Motor neuron (in vitro differentiated cells): ENCODE measurements at regions of chr15 and their contacts with region 1.

Region 1: DNA sequence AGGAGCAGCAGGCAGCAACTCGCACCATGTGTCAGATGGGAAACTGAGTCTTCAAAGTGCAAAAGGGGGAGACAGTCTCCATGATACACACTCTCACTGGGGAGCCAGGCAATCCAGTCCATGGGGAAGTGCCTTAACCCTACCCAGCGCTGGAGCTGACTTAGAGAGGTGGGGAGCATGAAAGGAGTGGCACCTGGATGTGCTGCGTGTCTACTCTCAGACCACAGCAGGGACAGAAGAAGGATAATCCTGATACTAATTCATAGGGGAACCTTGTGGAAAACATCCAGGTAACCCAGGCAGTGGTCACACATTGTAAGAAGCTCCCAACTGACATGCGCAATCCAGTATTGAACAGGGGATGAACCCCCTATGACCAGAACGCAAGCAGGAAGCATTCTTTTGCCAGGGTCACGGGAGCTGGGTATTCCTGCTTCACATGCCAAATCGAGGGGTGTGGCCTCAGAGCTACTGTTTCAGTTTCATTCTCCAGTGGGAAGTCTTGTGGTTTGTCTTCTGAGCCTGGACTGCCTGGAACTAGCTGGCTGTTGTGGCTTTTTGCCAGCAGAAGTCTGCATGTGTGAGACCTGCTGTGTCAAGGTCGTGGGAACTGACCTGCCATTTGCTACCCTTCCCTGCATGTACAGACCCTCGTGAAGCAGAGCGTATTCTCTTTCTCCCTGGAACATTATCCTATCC is 367.6 kb upstream of the NDN start:
- ATAC-seq: peak in 3 of 8 experiments; percentile 19 to 98 (median 80)
- H3K4me3 ChIP-seq: no peak overlapping the region
- H3K27ac ChIP-seq: no peak overlapping the region
- H3K4me1 ChIP-seq: peaks cover 0 to 4% of the 10 kb centered on the region in 2 donors

Region 2: GRCh38 chr15:24150542-24150941 is 95.8 kb after region 1 on chr15:
- in situ Hi-C with region 1: loop called in 1 of 9 experiments (anchors 25 kb)
- ATAC-seq: no peak
- H3K4me3 ChIP-seq: no peak overlapping the region
- H3K27ac ChIP-seq: no peak overlapping the region
- H3K4me1 ChIP-seq: no peaks in the 10 kb centered on the region